Activated CD4-positive, alpha-beta memory T cell treated with anti-CD3 and anti-CD28 coated beads, Interleukin-2, amount 10 ng/mL, durations not matched to agents 7 days and 5 days (primary cell): ENCODE measurements at regions of chr11 and their contacts with region 1.

Region 1: GRCh38 chr11:36746886-36747710 is 149.1 kb upstream of the RAG2 start:
- DNase-seq: peak; percentile 87
- H3K4me3 Mint-ChIP-seq: no peak overlapping the region
- H3K27ac Mint-ChIP-seq: no peak overlapping the region
- H3K4me1 Mint-ChIP-seq: no peaks in the 10 kb centered on the region
- H3K27me3 Mint-ChIP-seq: peaks cover 14% of the 10 kb centered on the region

Region 2: DNA sequence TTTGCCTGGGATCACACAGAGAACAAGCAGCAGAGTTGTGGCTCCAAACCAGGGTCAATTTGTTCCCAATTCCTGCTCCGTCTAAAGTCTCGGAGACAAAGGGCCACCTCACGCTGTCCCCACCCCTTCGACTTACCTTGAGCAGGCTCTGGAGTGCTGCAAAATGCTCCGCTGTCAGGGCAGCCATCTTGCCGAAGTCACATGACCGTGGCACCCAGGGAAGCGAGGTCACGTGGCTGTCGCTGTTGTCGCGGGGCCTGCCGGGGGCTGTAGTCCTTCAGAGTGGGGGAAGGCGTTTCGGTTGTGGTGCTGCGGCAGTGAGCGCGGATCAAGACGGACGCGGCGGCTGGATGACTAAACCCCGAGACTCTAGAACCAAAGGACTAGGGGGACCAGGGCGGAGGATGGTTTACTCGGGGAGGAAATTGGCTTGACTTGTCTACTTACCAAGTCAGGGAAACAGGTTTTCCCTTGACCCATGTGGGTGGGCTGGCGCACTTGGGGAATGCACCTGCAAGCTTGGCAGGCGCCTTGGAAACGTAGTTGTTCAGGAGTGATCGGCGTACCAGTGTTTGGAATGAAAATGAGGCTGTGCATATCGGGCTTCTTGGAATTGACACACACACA is 457.8 kb before region 1 on chr11 and contains the start of gene COMMD9:
- CTCF ChIA-PET with region 1: interaction called, 13 read pairs
- POLR2A ChIA-PET with region 1: no interaction called
- DNase-seq: peak; percentile 96
- H3K4me3 Mint-ChIP-seq: peak within 1 kb of the TSS; percentile 87
- H3K27ac Mint-ChIP-seq: peak within 1 kb of the TSS; percentile 64
- H3K4me1 Mint-ChIP-seq: peaks cover 30% of the 10 kb centered on the region
- H3K27me3 Mint-ChIP-seq: no peaks in the 10 kb centered on the region
- total RNA-seq, gene COMMD9: 30.5 to 34.1 TPM

Region 3: DNA sequence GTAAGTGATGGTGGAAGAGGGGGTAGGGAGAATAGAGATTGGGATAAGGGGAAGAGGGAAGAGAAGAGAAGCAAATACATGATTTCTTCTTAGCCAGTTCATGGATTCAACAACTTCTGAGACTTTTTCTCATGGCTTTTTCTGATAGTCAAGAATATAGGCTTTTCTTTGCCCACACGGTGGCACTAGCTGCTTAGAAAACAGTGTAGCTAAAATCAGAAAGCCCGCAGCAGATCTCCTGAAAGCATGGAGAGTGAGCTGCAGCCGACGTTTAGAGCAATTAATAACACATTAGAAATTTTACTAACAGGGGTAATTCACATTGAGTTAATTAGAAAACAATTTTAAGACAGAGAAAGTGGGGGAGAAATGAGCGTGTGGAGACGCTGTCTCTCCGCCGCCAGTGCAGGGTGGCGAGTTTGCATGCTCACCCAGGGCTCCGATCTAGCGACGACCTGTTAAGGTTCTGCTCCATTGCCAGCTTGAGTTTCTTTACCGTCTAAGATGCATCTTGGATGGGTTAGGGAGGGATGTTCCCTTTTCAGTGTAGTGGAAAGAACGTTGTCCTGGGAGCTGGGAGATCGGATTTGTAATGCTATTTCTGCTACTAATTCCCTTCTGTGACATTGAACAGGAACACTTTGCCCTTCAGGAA is 182.6 kb before region 1 on chr11:
- CTCF ChIA-PET with region 1: interaction called, 151 read pairs
- POLR2A ChIA-PET with region 1: no interaction called
- DNase-seq: peak; percentile 45
- H3K4me3 Mint-ChIP-seq: no peak overlapping the region
- H3K27ac Mint-ChIP-seq: no peak overlapping the region
- H3K4me1 Mint-ChIP-seq: peaks cover 4% of the 10 kb centered on the region
- H3K27me3 Mint-ChIP-seq: peaks cover 52% of the 10 kb centered on the region

Region 4: DNA sequence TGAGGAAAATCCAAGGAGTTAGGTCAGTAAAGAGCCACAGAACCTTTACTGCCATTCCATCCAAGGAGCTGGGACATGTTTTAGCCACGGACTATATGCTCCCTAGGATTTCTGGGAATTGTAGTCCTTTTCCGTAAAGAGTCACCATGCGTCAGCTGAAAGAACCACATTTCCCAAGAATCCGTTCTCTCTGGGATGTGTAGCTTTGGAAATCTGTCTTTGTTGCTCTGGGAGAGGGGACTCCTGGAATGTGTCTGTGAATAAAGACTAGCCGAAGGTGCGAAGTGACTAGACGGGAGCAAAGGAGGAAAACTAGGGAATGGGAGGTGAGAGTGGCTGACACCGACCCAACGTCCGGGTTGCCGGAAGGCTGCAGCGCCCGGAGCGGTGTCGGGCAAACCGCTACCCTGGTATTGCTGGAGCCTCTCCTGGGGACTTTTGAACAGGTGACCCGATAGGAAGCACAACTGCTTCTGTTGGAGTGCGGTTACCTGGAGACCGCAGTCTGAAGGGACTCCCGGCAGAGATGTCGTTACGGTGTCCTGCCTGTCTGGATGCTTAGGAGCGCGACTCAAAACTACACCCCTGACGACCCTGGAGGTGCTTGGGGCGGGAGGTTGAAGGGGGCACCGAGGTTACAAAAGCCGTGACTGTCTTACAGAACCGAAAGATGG is 152.6 kb before region 1 on chr11 and contains the start of gene IFTAP:
- CTCF ChIA-PET with region 1: no interaction called
- POLR2A ChIA-PET with region 1: no interaction called
- DNase-seq: peak; percentile 17
- H3K4me3 Mint-ChIP-seq: peak within 1 kb of the TSS; percentile 74
- H3K27ac Mint-ChIP-seq: no peak within 1 kb of the TSS
- H3K4me1 Mint-ChIP-seq: peaks cover 3% of the 10 kb centered on the region
- H3K27me3 Mint-ChIP-seq: peaks cover 38% of the 10 kb centered on the region
- total RNA-seq, gene IFTAP: 0.75 to 1.7 TPM

Region 5: DNA sequence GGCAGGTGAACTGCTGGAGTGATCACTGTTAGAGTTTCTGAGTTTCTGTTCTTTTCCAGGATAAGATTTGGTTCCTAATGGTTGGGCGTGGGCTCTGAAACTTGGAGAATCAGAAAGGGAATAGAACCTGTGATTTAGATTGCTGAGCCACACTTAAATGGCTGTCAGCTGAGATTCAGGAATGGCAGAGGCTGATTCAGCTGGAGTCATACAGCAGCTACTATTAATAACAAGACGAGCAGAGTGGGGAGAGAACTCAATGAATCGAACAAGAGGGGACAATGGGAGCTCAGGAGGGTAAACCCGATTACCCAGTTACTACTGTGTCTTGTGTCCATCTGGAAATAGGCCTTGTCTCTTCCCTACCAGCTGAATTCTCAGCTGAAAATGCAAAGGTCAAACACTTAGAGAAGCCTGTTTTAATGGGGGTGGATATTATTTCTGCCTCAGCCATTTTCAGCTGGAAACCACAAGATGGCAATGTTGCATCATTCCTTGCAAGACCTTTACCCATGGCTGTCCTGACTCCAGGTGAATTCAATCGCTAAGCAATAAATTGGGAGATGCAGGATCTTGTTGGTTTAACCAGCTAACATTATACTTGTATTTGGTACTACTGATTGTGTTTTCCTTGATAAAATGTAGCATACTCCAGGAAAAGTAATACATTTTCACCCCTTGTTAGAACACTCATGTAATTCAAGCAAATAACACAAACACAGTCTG is 44.6 kb before region 1 on chr11:
- CTCF ChIA-PET with region 1: interaction called, 25 read pairs
- POLR2A ChIA-PET with region 1: no interaction called
- DNase-seq: no peak
- H3K4me3 Mint-ChIP-seq: no peak overlapping the region
- H3K27ac Mint-ChIP-seq: no peak overlapping the region
- H3K4me1 Mint-ChIP-seq: no peaks in the 10 kb centered on the region
- H3K27me3 Mint-ChIP-seq: peaks cover 18% of the 10 kb centered on the region

Region 6: GRCh38 chr11:36729825-36730224 is 17.3 kb before region 1 on chr11:
- CTCF ChIA-PET with region 1: interaction called, 64 read pairs
- POLR2A ChIA-PET with region 1: no interaction called
- DNase-seq: no peak
- H3K4me3 Mint-ChIP-seq: no peak overlapping the region
- H3K27ac Mint-ChIP-seq: no peak overlapping the region
- H3K4me1 Mint-ChIP-seq: no peaks in the 10 kb centered on the region
- H3K27me3 Mint-ChIP-seq: peaks cover 10% of the 10 kb centered on the region